ENCODE measurements at regions of chr16 and their contacts with region 1.

Region 1: DNA sequence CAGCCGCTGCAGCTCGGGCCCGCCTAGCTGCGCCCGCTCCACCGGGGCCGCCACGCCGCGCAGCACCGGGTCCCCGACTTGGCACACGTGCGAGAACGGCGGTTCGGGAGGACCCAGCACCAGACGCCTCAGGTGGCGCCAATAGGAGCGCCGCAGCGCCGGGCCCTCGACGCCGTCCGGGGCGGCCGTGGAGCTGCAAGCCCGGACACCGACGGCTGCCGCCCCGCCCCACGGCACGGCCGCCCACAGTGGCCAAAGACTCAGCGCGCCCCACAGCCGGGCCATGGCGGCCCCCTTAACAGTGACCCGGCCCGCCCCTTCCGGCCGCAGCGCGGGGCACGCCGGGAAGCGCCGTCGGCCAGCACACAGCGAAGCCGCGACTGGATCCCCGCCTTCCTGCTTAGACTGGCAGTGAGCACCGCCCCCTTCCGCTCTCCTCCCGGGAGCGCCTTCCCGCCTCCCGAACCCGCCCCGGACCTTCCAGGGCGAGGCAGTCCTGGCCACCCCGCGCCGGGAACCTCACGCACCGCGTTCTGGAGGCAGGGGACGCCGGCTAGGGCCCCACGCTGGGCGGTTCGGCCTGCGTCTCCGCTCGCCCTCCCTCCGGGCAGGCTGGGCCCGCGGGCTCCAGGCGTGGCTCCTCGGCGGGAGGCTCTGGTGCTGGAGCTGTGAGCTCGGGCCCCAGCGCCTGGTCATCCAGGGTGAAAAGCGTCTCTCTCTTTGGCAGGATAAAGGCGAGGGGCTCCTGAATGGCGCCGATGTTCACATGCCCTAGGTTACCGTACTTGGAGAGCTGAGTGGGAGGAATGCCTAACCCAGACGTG is at the start of gene PDF:
- DNase-seq: peak; percentile 90 to 97 (median 92)
- ATAC-seq: peak; percentile 97
- H3K4me3 ChIP-seq: peak within 1 kb of the TSS; percentile 88
- H3K27ac ChIP-seq: peak within 1 kb of the TSS; percentile 95
- H3K4me1 ChIP-seq: peaks cover 21 to 53% of the 10 kb centered on the region in 2 experiments; a peak in 4 of 5 replicates
- H3K27me3 ChIP-seq: no peaks in the 10 kb centered on the region
- CTCF ChIP-seq: no peak; a peak in 1 of 6 replicates
- EP300 ChIP-seq: no peak
- POLR2A ChIP-seq: peak; percentile 92
- RAD21 ChIP-seq: peak in 1 of 2 experiments; percentile 10; a peak in 1 of 4 replicates
- polyA plus RNA-seq, gene PDF: 0.15 to 0.25 TPM

Region 2: DNA sequence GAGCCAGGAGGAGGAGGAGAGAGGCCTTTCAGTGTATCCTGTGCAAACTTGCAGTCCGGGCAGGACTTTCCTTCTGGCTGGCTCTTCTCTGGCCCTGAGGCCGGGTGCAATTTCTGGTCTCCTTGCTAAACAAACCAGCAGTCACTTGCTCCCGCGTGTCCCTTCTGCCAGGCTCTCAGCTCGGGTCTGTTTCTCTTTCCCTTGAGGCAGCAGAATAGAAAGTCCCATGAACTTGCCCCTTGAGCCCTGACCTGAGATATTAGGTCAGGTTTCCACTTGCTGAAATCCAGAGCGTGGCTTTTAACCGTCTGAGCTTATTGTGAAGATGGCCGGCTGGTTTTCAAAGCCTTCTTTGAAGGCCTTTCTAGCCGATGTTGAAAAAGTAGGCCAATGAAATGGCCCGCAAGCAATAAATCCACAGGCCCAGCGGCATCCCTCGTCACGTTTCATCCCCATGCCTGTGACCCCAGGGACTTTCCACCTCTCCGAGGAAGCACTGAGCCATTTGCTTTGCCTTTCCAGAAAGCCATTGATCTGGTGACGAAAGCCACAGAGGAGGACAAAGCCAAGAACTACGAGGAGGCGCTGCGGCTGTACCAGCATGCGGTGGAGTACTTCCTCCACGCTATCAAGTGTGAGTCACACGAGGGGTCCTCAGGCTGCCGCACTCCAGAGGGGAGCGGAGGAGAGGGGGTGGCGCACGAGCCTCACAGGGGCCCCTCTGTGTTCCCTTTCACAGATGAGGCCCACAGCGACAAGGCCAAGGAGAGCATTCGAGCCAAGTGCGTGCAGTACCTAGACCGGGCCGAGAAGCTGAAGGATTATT is 14.8 kb before region 1 on chr16:
- CTCF ChIA-PET with region 1: no interaction called
- POLR2A ChIA-PET with region 1: interaction called, 51 read pairs
- in situ Hi-C with region 1: no loop called
- intact Hi-C with region 1: no loop called
- DNase-seq: no peak
- ATAC-seq: no peak
- H3K4me3 ChIP-seq: no peak overlapping the region
- H3K27ac ChIP-seq: no peak overlapping the region
- H3K4me1 ChIP-seq: peaks cover 3 to 15% of the 10 kb centered on the region in 2 experiments; a peak in 2 of 5 replicates
- H3K27me3 ChIP-seq: no peaks in the 10 kb centered on the region
- CTCF ChIP-seq: no peak
- EP300 ChIP-seq: no peak
- POLR2A ChIP-seq: no peak
- RAD21 ChIP-seq: no peak

Measured in K562 (cell line).